ENCODE measurements at regions of chr1 and their contacts with region 1.

Region 1: GRCh38 chr1:191671236-191671635 is 487.0 kb upstream of the RGS18 start:
- DNase-seq: no peak
- ATAC-seq: no peak
- H3K4me3 ChIP-seq: no peak overlapping the region
- H3K27ac ChIP-seq: no peak overlapping the region
- H3K4me1 ChIP-seq: no peaks in the 10 kb centered on the region
- H3K27me3 ChIP-seq: no peaks in the 10 kb centered on the region
- CTCF ChIP-seq: no peak

Region 2: GRCh38 chr1:191592039-191592438 is 79.2 kb before region 1 on chr1:
- intact Hi-C with region 1: no loop called
- DNase-seq: no peak
- ATAC-seq: no peak
- H3K4me3 ChIP-seq: no peak overlapping the region
- H3K27ac ChIP-seq: no peak overlapping the region
- H3K4me1 ChIP-seq: no peaks in the 10 kb centered on the region
- H3K27me3 ChIP-seq: no peaks in the 10 kb centered on the region
- CTCF ChIP-seq: no peak

Region 3: DNA sequence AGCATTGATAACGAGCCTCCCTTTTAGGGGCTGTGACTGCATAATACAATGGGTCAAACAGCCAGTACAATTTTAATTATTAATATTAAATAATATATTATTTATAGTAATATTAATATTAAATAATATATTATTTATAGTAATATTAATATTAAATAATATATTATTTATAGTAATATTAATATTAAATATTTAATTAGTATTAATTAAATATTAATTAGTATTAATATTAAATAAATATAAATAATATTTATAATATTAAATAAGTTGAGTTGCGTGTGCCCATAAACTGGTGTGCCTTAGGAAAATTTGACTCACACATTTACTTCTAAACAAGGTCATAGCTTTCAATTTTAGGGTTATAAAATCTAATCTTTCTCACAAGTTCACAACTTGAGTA is 22.3 kb before region 1 on chr1:
- intact Hi-C with region 1: loop called in 1 of 10 experiments (anchors 2 kb)
- DNase-seq: no peak
- ATAC-seq: no peak
- H3K4me3 ChIP-seq: no peak overlapping the region
- H3K27ac ChIP-seq: no peak overlapping the region
- H3K4me1 ChIP-seq: no peaks in the 10 kb centered on the region
- H3K27me3 ChIP-seq: no peaks in the 10 kb centered on the region
- CTCF ChIP-seq: no peak

Measured in heart right ventricle (tissue), 16 donors.